ENCODE measurements at regions of chr2 and their contacts with region 1.

Region 1: DNA sequence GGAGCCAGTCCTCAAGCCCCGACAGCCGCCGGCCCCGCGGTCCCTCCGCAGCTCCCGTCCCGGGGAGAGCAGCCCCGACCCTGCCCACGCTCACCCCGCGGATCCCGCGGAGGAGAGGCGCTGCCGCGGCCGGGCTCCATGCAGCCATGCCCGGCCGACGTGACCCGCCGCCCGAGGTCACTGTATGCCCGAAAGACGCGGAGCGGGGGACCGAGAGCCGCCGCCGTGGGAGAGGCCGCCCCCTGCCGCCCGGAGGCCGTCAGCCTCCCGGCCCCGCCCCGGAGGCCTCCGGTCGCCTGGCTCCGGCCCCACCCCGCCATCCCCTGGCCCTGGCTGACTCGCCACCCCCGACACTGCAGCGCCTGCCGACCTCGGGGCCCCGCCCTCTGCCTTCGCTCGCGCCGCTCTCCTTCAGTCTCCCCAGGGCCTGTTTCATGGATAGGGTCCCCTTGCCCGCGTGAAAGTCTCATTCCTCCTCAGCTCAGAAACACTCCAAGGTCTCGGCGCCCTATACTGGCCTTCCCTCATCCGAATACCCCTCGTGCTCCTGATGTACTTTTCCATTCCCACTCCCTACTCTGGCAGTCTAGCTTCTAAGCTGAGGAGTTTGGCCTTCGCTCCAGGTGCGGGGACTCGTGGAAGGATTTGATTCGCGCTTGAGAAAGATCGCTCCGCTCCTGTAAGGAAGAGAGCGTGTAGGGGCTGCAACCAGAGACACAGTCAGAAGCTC is at the start of gene BOLA3:
- DNase-seq: peak; percentile 81
- H3K4me3 ChIP-seq: peak within 1 kb of the TSS; percentile 58 to 80 (median 66)
- H3K27ac ChIP-seq: peak within 1 kb of the TSS; percentile 66
- H3K4me1 ChIP-seq: peaks cover 16% of the 10 kb centered on the region
- H3K27me3 ChIP-seq: no peaks in the 10 kb centered on the region
- CTCF ChIP-seq: peak; percentile 23 to 52
- total RNA-seq, gene BOLA3: 20.5 to 80.6 TPM

Region 2: DNA sequence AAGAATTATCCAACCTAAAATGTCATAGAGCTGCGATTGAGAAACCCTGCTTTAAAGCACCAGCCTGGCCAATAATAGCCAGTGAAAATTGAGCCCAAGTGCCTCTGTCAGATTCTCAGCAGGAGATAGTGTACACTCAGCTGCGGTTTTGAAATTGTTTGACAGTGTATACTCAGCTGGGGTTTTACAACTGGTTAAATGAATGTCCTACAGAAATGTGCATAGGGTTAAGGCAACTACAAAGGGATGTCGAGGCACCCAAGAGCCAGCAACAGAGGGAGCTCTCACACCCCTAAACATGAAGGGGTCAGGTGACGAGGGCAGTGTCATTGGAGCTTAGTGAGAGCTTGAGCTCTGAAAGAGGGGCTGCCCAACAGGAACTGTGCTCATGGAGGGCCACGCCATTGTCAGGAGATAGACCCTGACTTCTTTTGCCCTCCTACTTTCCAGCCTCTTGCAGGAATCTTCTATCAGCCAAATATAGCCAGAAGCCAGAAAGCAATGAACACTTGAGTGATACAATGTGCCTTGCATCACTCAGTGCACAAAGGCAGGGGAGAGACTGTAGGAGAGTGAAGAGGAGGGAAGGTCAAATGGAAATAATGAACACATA is 239.9 kb before region 1 on chr2:
- CTCF ChIA-PET with region 1: interaction called, 3 read pairs
- dilution Hi-C with region 1: no loop called
- in situ Hi-C with region 1: no loop called
- intact Hi-C with region 1: loop called (anchors 1 kb)
- DNase-seq: peak; percentile 31
- H3K4me3 ChIP-seq: no peak overlapping the region
- H3K27ac ChIP-seq: no peak overlapping the region
- H3K4me1 ChIP-seq: no peaks in the 10 kb centered on the region
- H3K27me3 ChIP-seq: no peaks in the 10 kb centered on the region
- CTCF ChIP-seq: peak in 1 of 2 donors; percentile 46

Region 3: DNA sequence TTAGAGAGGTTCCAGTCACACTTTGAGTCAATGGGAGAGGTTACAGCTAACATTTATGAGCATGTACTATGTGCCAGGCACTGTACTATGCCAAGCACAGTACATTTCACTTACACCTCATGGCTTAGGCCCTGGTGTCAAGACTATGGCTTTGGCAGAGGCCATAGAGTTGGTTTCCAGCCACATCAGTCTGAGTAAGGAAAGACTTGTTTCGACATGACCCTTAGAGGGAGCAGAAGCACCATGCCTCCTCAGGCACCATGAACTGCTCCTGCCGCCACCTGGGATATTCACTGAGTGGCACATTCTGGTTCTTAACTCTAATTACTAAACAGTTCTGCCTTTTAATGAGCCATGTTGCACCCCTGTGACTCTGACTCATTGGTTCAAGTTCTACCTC is 208.5 kb before region 1 on chr2:
- CTCF ChIA-PET with region 1: no interaction called
- dilution Hi-C with region 1: no loop called
- in situ Hi-C with region 1: no loop called
- intact Hi-C with region 1: loop called (anchors 1 kb)
- DNase-seq: peak; percentile 98
- H3K4me3 ChIP-seq: no peak overlapping the region
- H3K27ac ChIP-seq: peak overlapping the region; percentile 89
- H3K4me1 ChIP-seq: peaks cover 58% of the 10 kb centered on the region
- H3K27me3 ChIP-seq: no peaks in the 10 kb centered on the region
- CTCF ChIP-seq: peak in 1 of 2 donors; percentile 60

Region 4: GRCh38 chr2:74093840-74094239 is 54.1 kb before region 1 on chr2:
- CTCF ChIA-PET with region 1: no interaction called
- dilution Hi-C with region 1: no loop called
- in situ Hi-C with region 1: no loop called
- intact Hi-C with region 1: no loop called
- DNase-seq: no peak
- H3K4me3 ChIP-seq: no peak overlapping the region
- H3K27ac ChIP-seq: no peak overlapping the region
- H3K4me1 ChIP-seq: no peaks in the 10 kb centered on the region
- H3K27me3 ChIP-seq: no peaks in the 10 kb centered on the region
- CTCF ChIP-seq: no peak